Naive thymus-derived CD4-positive, alpha-beta T cell (primary cell): ENCODE measurements at regions of chr2 and their contacts with region 1.

Region 1: GRCh38 chr2:216350214-216350789 is 22.0 kb downstream of the MARCHF4 start:
- DNase-seq: no peak
- ATAC-seq: peak; percentile 63
- H3K4me3 ChIP-seq: no peak overlapping the region
- H3K4me3 Mint-ChIP-seq: peak overlapping the region in 9 of 10 donors; percentile 14 to 55 (median 38)
- H3K27ac ChIP-seq: no peak overlapping the region
- H3K27ac Mint-ChIP-seq: peak overlapping the region; percentile 22 to 90 (median 76)
- H3K4me1 ChIP-seq: peaks cover 71 to 72% of the 10 kb centered on the region in 2 donors
- H3K4me1 Mint-ChIP-seq: peaks cover 67 to 93% (median 85%) of the 10 kb centered on the region in 7 donors
- H3K27me3 ChIP-seq: no peaks in the 10 kb centered on the region
- H3K27me3 Mint-ChIP-seq: no peaks in the 10 kb centered on the region

Region 2: GRCh38 chr2:216215658-216216390 is 134.5 kb before region 1 on chr2:
- CTCF ChIA-PET with region 1: no interaction called
- POLR2A ChIA-PET with region 1: interaction called, 3 read pairs
- intact Hi-C with region 1: loop called in 1 of 2 experiments (anchors 5 kb)
- DNase-seq: no peak
- ATAC-seq: no peak
- H3K4me3 ChIP-seq: no peak overlapping the region
- H3K4me3 Mint-ChIP-seq: no peak overlapping the region
- H3K27ac ChIP-seq: no peak overlapping the region
- H3K27ac Mint-ChIP-seq: no peak overlapping the region
- H3K4me1 ChIP-seq: peaks cover 0 to 9% of the 10 kb centered on the region in 2 donors
- H3K4me1 Mint-ChIP-seq: peaks cover 11 to 39% (median 34%) of the 10 kb centered on the region in 7 donors
- H3K27me3 ChIP-seq: no peaks in the 10 kb centered on the region
- H3K27me3 Mint-ChIP-seq: no peaks in the 10 kb centered on the region

Region 3: DNA sequence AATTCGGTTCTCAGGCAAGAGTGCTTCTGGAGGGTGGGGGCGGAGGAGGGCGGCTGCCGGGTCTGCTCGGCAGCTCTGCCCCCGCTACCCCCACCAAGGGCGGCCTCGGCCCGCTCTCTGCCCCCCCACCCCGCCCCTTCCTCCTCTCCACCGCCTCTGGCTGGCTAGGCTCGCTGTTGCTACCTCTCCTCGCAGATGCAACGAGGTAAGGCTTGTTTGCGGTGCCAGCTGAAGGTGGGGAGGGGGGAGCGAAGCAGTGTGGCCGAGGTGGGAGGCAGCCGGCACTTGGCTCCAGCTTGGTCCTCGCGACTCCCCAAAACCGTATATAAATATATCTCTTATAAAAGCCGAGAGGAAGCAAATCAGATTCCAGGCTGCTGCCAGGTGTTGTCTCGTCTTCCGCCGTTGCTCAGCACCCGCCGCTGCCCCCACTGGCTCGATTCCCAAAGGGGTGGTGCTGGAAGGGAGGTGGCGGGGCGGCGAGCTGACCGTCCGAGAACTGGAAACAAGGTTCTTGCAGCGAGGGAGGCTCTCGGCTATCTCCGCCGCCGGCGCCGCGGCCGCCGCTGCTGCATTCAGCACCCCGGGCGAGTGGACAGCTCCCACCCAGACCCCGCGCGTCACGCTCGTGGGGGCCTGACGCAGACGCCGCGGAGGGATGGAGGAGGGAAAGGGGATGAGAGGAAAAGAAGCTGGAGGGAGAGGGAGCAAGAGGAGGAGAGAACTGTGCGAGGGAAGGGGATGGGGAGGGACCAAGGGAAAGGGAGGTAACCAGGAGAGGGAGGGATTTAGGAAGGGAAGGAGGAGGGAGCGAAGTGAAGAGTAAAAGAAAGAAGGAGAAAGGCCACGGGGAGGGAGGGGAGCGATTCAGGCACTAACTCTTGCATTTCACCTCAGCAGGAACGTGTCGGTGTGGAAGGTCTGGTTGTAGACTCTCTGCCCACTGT is 21.7 kb after region 1 on chr2 and contains the start of gene MARCHF4:
- CTCF ChIA-PET with region 1: interaction called, 4 read pairs
- POLR2A ChIA-PET with region 1: interaction called, 3 read pairs
- intact Hi-C with region 1: loop called (anchors 1 to 2 kb)
- DNase-seq: peak; percentile 50 to 81 (median 62)
- ATAC-seq: peak; percentile 92
- H3K4me3 ChIP-seq: no peak within 1 kb of the TSS
- H3K4me3 Mint-ChIP-seq: peak within 1 kb of the TSS; percentile 13 to 74 (median 58)
- H3K27ac ChIP-seq: no peak within 1 kb of the TSS
- H3K27ac Mint-ChIP-seq: peak within 1 kb of the TSS in 1 of 9 donors; percentile 32
- H3K4me1 ChIP-seq: peaks cover 0 to 7% of the 10 kb centered on the region in 2 donors
- H3K4me1 Mint-ChIP-seq: peaks cover 12 to 28% (median 17%) of the 10 kb centered on the region in 7 donors
- H3K27me3 ChIP-seq: peaks cover 4 to 8% of the 10 kb centered on the region in 2 donors
- H3K27me3 Mint-ChIP-seq: peaks cover 46 to 72% (median 54%) of the 10 kb centered on the region in 5 donors
- total RNA-seq, gene MARCHF4: not detected

Region 4: DNA sequence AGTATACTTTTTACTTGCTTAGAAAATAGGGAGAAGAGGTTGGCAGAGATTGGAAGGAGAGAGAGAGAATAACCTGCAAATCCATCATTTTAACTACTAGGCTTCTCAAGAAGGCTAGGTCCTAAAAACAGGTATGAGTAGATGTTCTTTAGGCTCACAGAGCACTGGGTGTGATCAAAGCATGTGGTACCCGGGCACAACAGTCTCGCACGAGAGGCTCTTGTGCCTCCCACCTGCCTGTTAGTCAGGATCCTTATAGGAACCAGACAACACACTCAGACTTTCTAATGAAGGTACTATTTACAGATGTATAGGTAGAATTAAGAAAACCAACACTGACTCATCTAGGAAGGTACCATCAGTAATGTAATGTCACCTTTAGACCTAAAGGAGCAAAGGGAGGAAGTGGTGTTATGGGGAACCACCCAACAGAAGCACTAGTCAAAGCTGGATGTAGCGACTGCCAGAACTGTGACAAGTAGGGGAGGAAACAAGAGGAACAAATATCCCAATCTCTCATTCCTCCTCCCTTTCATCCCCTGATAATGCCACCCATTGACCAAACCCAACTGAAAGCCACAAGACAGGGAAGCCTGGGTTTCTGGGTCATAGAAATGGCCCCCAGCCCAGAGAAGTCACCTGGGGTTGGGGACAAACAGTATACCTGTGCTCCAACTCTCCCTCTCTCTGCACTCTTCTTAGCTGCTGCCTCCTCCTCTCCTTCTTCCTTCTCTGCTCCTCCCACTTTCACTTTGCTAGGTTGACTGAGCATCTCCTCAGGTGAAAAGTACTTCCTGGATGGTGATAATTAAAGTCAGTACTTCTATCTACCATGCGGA is 38.0 kb after region 1 on chr2:
- CTCF ChIA-PET with region 1: interaction called, 5 read pairs
- POLR2A ChIA-PET with region 1: interaction called, 4 read pairs
- intact Hi-C with region 1: loop called (anchors 5 kb)
- DNase-seq: peak in 6 of 9 donors; percentile 14 to 65 (median 48)
- ATAC-seq: peak; percentile 88
- H3K4me3 ChIP-seq: no peak overlapping the region
- H3K4me3 Mint-ChIP-seq: peak overlapping the region in 6 of 10 donors; percentile 23 to 75 (median 58)
- H3K27ac ChIP-seq: no peak overlapping the region
- H3K27ac Mint-ChIP-seq: peak overlapping the region in 8 of 9 donors; percentile 8 to 94 (median 63)
- H3K4me1 ChIP-seq: peaks cover 0 to 13% of the 10 kb centered on the region in 2 donors
- H3K4me1 Mint-ChIP-seq: peaks cover 12 to 19% (median 18%) of the 10 kb centered on the region in 7 donors
- H3K27me3 ChIP-seq: no peaks in the 10 kb centered on the region
- H3K27me3 Mint-ChIP-seq: peaks cover 0 to under 1% (median 0%) of the 10 kb centered on the region in 5 donors